A549 (cell line): ENCODE measurements at regions of chr16 and their contacts with region 1.

Region 1: DNA sequence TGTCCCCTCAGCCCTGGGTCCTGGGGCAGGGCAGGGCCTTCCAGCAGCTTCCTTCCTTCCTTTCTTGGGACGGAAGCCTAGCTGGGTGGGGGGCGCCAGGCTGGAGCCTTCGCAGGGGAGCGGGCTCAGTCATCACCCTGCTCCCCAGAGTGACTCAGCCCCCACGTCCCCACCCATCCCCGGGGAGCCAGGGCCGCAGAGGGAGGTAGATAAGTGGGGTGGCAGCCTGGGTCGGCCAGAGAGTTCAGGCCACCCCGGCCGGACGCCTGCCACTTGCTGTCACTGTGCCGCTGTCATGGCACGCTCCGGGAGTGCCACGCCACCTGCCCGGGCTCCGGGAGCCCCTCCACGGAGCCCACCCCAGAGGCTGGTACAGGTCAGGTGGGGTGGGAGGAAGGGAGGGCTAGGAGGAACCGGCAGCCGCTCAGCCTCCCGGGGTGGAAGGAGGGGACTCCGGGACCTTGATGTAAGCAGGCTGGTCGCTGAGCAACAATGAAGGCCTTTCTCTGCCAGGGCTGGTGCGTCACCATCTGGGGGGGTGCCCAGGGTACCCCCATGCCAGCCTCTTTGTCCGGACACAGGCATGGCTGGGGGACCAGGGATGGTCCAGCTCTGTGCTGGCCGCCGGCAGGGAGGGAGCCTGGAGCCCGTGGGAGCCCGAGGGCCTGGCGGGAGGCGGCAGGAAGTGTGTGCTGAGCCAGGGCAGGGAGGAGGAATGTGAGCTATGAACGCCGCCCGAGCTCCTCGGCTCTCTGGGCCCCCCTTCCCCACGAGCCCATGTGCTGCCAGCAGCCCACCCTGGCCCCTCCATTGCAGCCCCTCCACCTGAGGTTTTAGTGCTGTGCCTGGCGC is 6.6 kb downstream of the NHERF2 start:
- DNase-seq: peak in 1 of 2 experiments; percentile 65
- ATAC-seq: peak; percentile 55 to 69
- H3K4me3 ChIP-seq: peak overlapping the region; percentile 25; the same call in 2 of the 3 replicates
- H3K27ac ChIP-seq: peak overlapping the region; percentile 82 to 90
- H3K4me1 ChIP-seq: peaks cover 62% of the 10 kb centered on the region
- CTCF ChIP-seq: no peak
- EP300 ChIP-seq: no peak
- POLR2A ChIP-seq: 0 out of 2 replicates have a peak, but pooled peaks have one; percentile 11
- RAD21 ChIP-seq: no peak

Region 2: DNA sequence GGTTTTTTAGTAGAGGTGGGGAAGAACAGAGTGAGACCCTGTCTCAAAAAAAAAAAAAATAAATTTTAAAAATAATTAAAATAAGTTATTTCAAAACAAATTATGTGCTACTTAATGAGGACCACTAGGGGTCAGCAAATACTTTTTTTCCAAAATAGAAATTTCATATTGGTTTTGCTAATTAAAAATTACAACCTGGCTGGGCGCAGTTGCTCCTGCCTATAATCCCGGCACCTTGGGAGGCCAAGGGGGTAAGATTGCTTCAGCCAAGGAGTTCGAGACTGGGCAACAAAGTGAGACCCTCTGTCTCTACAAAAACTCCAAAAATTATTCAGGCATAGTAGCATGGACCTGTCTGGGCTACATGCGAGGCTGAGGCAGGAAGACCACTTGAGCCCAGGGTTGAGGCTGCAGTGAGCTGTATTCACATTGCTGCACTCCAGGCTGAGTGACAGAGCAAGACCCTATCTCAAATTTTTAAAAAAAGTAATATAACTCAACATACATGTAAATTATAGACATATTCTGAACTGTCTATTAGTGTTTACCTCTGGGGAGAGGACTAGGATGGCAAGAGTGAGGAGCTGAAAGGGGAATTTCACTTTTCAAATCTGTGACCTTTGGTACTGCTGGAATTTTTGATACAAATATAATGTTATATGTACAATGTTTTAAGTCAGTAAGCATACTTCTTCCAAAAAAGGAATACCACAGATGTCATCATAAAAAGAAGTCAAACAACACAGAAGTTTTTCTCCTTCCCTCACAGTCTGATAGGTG is 169.4 kb before region 1 on chr16:
- CTCF ChIA-PET with region 1: no interaction called
- POLR2A ChIA-PET with region 1: no interaction called
- DNase-seq: peak in 1 of 2 experiments; percentile 44
- ATAC-seq: peak; percentile 66 to 74; a peak in 5 of 6 replicates
- H3K4me3 ChIP-seq: no peak overlapping the region
- H3K27ac ChIP-seq: peak overlapping the region; percentile 37 to 67; a peak in 5 of 6 replicates
- H3K4me1 ChIP-seq: peaks cover 26% of the 10 kb centered on the region
- CTCF ChIP-seq: peak; percentile 84
- EP300 ChIP-seq: no peak
- POLR2A ChIP-seq: no peak
- RAD21 ChIP-seq: peak; percentile 75 to 90

Region 3: DNA sequence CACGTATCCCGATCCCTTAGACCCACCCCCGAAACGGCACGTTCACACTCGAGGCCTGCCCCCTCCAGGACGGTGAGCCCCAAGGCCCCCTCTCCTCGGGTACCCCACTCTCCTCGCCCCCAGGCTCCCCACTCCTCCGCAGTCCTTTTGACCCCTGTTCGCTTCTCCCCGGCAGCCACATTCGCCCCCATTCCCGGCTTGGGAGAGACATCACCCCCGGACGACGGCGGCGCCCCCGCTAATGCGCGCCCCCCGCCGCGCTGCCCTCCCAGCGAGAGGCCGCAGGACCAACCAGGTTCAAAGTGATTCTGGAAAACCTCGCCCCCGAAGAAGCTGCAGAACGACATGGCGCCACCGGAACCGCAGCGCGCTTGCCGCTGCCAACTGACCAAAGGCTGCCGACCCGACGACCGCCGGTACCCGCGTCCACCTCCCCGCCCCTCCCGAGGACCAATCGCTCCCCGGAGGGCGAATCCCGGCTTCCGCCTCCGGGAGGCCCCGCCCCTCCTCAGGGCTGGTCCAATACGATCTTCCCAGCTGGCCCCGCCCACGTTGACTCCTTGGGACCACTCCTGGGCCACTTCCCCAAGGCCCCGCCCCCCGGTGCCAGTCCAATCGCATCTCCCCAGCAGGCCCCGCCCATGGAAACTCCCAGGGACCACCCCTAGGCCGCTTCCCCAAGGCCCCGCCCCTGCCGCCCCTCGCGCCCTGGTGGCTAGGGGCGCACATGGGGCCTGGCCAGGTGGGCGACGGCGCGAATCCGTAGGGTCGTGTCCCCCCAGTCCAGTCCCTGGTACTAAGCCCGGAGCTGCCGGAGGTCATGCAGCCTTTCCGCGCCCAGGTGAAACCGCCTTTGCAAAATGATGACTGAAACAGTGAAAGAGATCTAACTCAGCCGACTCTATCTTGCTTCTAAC is 90.2 kb before region 1 on chr16 and contains the start of gene MSRB1:
- CTCF ChIA-PET with region 1: no interaction called
- POLR2A ChIA-PET with region 1: no interaction called
- DNase-seq: peak; percentile 97 to 98
- ATAC-seq: peak; percentile 84 to 93
- H3K4me3 ChIP-seq: peak within 1 kb of the TSS; percentile 84
- H3K27ac ChIP-seq: peak within 1 kb of the TSS; percentile 79 to 92
- H3K4me1 ChIP-seq: peaks cover 19% of the 10 kb centered on the region
- CTCF ChIP-seq: no peak
- EP300 ChIP-seq: no peak
- POLR2A ChIP-seq: peak; percentile 90
- RAD21 ChIP-seq: no peak
- polyA plus RNA-seq, gene MSRB1: 27.7 and 34.4 TPM in 2 replicates

Region 4: DNA sequence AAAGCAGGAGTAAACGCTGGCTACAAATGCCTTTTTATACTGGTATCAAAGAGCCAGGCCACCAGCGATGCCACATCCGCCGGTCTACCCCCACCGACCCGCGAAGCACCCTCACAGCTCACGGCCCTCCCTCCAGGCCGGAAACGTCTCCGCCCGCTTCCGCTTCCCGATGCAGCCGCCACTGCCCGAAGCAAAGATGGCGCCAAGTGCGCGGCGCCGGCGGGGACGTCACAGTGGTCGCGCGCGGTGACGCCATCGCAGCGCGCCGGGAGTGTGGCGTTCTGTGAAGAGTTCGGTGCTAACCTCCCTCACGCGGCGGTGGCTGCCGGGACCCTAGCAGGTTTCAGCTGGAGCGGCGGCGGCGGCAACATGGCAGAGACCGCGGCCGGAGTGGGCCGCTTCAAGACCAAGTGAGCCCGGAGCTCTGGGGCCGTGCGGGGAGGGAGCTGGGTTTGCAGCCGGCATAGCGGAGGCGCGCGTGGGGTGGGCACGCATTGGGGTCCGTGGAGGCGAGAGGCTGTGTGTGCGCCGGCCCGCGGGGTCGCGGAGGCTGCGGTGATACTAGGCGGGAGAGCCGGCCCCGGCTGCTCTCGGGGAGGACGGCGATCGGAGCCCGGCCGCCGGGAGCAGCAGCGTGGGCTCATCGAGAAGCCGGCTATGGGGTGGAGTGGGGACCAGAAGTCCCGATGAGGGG is 61.3 kb before region 1 on chr16 and contains the start of gene TBL3:
- CTCF ChIA-PET with region 1: no interaction called
- POLR2A ChIA-PET with region 1: no interaction called
- DNase-seq: peak; percentile 91 to 95
- ATAC-seq: peak; percentile 85 to 92
- H3K4me3 ChIP-seq: peak within 1 kb of the TSS; percentile 65
- H3K27ac ChIP-seq: peak within 1 kb of the TSS; percentile 98 to 99
- H3K4me1 ChIP-seq: peaks cover 17% of the 10 kb centered on the region
- CTCF ChIP-seq: no peak
- EP300 ChIP-seq: no peak
- POLR2A ChIP-seq: peak; percentile 88
- RAD21 ChIP-seq: no peak
- polyA plus RNA-seq, gene TBL3: 21.9 and 25.9 TPM in 2 replicates

Region 5: GRCh38 chr16:2047330-2048115 is 14.2 kb after region 1 on chr16 and contains the starts of genes NTHL1 and TSC2:
- CTCF ChIA-PET with region 1: interaction called, 12 read pairs
- POLR2A ChIA-PET with region 1: interaction called, 9 read pairs
- DNase-seq: peak; percentile 86 to 98
- ATAC-seq: peak; percentile 92 to 94
- H3K4me3 ChIP-seq: peak within 1 kb of the TSS; percentile 68
- H3K27ac ChIP-seq: peak within 1 kb of the TSS; percentile 79 to 91
- H3K4me1 ChIP-seq: peaks cover 35% of the 10 kb centered on the region
- CTCF ChIP-seq: peak; percentile 29; the same call in 1 of the 3 replicates
- EP300 ChIP-seq: no peak
- POLR2A ChIP-seq: peak; percentile 72
- RAD21 ChIP-seq: peak; percentile 10 to 15; a peak in 1 of 5 replicates
- polyA plus RNA-seq, gene NTHL1: 28.8 and 34.8 TPM in 2 replicates
- polyA plus RNA-seq, gene TSC2: 32.6 and 41.7 TPM in 2 replicates

Region 6: DNA sequence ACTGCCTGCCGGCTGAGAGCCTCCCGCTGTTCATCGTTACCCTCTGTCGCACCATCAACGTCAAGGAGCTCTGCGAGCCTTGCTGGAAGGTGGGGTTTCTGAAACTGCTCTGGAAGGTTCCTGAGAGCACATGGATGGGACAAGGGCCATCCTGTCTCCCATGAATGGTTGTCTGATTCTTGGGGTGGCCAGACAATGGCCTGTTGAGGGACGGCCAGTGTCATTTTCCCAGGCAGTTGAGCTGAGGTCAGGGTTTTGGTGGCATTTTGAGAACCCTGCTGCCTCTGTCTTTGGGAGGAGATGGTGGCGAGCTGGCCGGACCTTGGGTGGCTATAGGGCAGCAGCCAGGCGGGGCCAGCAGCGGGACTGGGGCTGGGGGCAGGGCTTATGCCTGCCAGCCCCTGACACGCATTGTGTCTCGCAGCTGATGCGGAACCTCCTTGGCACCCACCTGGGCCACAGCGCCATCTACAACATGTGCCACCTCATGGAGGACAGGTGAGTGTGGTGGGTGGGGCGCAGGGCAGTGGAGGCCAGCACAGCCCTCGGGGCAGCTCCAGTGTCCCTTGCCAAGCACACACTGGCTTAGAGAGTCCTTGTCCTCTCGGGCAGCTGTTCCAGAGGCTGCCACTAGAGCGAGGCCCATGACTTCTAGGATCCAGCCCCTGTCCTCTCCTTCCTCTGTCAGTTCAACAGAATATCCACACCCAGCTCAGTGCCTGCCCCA is 23.6 kb after region 1 on chr16:
- CTCF ChIA-PET with region 1: interaction called, 13 read pairs
- POLR2A ChIA-PET with region 1: no interaction called
- DNase-seq: peak in 1 of 2 experiments; percentile 56
- ATAC-seq: peak; percentile 88 to 91
- H3K4me3 ChIP-seq: no peak overlapping the region
- H3K27ac ChIP-seq: no peak overlapping the region
- H3K4me1 ChIP-seq: no peaks in the 10 kb centered on the region
- CTCF ChIP-seq: no peak
- EP300 ChIP-seq: no peak
- POLR2A ChIP-seq: no peak
- RAD21 ChIP-seq: 0 out of 5 replicates have a peak, but pooled peaks of 1 of the 2 experiments have one; percentile 9